Posterior vena cava (tissue), 2 donors: ENCODE measurements at regions of chr7 and their contacts with region 1.

Region 1: GRCh38 chr7:33757562-33758165 is 147.7 kb upstream of the BMPER start:
- DNase-seq: no peak

Region 2: DNA sequence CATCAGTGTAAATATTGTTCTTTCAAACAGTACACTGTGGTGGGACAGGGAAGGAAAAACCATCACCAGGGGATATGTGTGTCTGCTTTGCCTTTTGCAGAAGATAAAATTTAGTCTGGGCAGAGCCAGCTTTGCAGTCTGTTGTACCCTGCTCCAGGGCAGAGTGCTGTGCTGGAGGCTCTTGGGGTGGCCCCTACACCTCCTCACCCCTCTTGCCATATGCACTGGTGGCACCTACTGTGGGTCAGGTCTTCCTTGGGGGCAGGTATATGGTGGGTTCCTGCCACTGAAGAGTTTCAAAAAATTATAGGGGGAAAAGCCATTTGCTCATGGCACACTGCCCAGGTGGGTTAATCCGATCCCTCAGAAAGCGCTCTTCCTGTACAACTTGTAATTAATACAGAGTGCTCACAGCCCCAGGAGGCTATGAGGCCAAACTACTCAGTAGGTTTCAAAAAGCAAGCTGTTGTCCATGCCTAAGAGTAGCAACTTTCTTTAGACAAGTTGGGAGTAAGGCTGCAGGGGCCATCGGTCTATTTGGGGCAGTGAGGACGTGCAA is 35.0 kb after region 1 on chr7:
- intact Hi-C with region 1: loop called in 1 of 2 experiments (anchors 1 kb)
- DNase-seq: no peak

Region 3: GRCh38 chr7:33895025-33895804 is 137.6 kb after region 1 on chr7:
- intact Hi-C with region 1: loop called (anchors 10 kb)
- DNase-seq: peak; percentile 96

Region 4: DNA sequence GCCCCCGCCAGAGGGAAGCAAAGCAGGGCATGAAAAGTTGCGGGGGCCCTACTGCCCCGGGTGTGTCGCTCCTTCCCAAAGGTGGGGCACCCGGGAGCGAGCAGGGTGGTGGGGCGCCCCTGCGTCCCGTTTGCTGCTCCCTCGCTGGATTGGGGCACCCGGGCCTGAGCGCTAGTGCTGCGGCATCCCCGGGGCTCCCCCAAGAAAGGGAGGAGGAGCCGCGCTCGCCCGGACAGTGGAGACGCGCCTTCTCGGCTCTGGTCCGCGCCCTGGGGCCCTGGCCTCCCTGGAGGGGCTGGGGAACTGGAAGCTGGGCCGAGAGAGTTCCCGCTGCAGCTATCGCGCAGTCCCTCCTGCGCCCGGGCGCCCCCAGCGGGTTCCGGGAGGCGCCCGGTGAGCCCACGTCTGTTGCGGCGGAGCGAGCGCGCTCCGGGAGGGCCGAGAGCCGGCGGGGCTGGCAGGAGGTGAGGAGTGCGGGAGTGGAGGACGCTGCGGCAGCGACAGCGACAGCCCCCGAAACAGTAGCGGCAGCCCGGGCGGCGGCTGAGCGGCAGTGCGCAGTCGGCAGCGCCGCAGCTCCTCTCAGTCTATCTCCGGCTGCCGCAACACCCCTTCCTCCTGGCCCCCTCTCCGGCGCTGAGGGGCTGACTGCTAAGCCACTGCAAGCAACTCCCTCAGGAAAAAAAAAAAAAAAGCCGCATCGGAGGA is 147.2 kb after region 1 on chr7:
- intact Hi-C with region 1: loop called in 1 of 2 experiments (anchors 10 kb)
- DNase-seq: peak; percentile 83

Region 5: GRCh38 chr7:34396437-34397065 is 638.9 kb after region 1 on chr7:
- intact Hi-C with region 1: no loop called
- DNase-seq: no peak